Dorsolateral prefrontal cortex (tissue), 120 donors: ENCODE measurements at regions of chr12 and their contacts with region 1.

Region 1: DNA sequence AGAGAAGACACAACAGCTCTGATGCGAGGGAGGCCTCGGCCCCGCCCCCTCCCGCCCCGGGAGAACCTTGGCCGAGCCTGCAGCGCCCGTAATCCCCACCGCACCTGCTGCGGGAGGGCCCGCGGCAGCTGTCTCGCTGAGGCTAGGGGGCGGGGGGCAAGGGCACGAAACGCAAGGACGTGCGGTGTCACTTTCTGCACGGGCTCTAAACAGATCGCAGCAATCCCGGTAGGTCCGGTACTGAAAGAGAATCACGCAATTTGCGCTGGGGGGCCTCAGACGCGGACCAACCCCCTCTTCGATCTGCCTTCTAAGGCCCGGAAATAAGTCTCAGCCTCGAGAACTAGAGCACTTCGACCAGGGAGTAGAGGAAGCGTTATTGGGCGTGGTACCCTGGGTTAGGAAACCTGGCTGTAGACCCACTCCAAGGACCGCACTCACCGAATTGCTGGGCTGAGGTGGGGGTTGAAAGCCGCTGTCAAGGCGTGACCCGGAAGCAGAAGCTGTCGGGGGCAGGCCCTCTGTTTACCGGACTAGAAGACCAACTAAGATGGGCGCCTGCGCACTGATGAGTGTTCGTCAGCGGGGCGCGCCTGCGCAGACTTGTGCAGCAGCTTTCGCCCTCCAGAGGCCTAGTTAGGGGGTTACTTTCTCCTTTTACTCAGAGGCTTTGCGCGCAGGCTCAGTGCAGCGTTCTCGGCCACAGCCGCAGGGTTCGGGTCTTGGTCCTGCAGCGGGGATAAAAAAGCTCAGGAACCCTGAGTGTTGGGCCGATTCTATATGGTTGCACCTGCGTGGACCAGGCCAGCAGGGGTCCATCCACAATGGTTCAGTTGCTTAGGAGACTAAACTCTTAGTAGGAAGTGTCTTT is at the start of gene ASB8:
- DNase-seq: peak; percentile 97 to 100 (median 98)
- H3K4me3 ChIP-seq: peak within 1 kb of the TSS; percentile 60 to 99 (median 90)
- H3K27ac ChIP-seq: peak within 1 kb of the TSS; percentile 71 to 97 (median 90)
- H3K27me3 ChIP-seq: peaks cover 0 to 5% (median 0%) of the 10 kb centered on the region in 45 donors
- CTCF ChIP-seq: peak; percentile 36 to 80 (median 67)
- total RNA-seq, gene ASB8: 36.8 to 80.8 (median 58.2) TPM

Region 2: GRCh38 chr12:47963340-47964040 is 193.8 kb before region 1 on chr12 and contains the start of gene TMEM106C:
- intact Hi-C with region 1: loop called in 1 of 2 experiments (anchors 2 kb)
- DNase-seq: peak; percentile 75 to 91 (median 86)
- H3K4me3 ChIP-seq: peak within 1 kb of the TSS; percentile 48 to 98 (median 85)
- H3K27ac ChIP-seq: peak within 1 kb of the TSS in 13 of 59 donors; percentile 6 to 83 (median 39)
- H3K27me3 ChIP-seq: peaks cover 0 to 19% (median 0%) of the 10 kb centered on the region in 45 donors
- CTCF ChIP-seq: peak; percentile 84 to 99 (median 96)
- total RNA-seq, gene TMEM106C: 21.4 to 75.3 (median 46.1) TPM

Region 3: GRCh38 chr12:48105862-48106680 is 51.2 kb before region 1 on chr12 and contains the start of gene SENP1:
- intact Hi-C with region 1: loop called (anchors 2 to 5 kb)
- DNase-seq: peak; percentile 79 to 93 (median 90)
- H3K4me3 ChIP-seq: peak within 1 kb of the TSS; percentile 56 to 99 (median 92)
- H3K27ac ChIP-seq: peak within 1 kb of the TSS; percentile 83 to 99 (median 95)
- H3K27me3 ChIP-seq: peaks cover 0 to 13% (median 0%) of the 10 kb centered on the region in 45 donors
- CTCF ChIP-seq: peak in 53 of 56 donors; percentile 16 to 74 (median 47)
- total RNA-seq, gene SENP1: 8.3 to 29.6 (median 18.5) TPM

Region 4: DNA sequence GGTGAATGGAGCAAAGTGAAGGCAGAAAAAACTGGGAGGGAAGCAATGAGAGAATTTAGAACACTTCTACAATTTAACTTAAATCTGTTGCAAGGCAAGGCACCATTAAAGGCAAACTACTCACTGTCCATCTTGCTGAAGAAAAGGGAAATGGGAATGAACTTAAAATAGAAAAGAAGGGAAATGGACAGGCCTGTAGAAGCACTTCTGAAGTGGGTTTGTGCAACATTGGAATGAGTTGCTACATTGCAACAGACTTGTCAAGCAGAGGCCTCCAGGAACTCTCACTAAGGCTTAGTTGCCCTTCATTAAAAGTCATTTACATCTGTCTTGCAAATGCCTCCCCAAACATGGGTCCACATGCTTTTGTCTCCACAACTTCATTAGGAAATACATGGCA is 59.5 kb after region 1 on chr12:
- intact Hi-C with region 1: no loop called
- DNase-seq: no peak
- H3K4me3 ChIP-seq: no peak overlapping the region
- H3K27ac ChIP-seq: no peak overlapping the region
- H3K27me3 ChIP-seq: no peaks in the 10 kb centered on the region
- CTCF ChIP-seq: no peak

Region 5: DNA sequence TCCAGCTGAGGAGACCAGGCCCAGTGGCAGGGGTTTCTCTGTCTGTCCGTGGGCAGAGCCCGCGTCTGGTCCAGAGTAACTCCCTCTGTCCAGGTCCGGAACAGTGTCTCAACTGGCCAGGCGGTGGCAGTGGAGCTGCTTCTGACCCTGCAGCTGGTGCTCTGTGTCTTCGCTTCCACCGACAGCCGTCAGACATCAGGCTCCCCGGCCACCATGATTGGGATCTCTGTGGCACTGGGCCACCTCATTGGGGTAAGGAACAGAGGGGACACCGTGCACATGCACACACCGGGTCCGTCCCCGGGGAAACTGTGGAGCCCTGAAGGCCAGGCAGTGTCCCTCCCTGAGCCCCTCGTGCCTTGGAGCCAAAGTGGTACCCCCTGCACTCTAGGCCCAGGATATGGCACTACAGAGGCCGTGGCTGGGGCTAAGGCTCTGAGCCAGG is 1817.0 kb after region 1 on chr12:
- intact Hi-C with region 1: no loop called
- DNase-seq: peak; percentile 57 to 88 (median 86)
- H3K4me3 ChIP-seq: peak overlapping the region in 36 of 59 donors; percentile 1 to 56 (median 24)
- H3K27ac ChIP-seq: peak overlapping the region in 50 of 59 donors; percentile 14 to 86 (median 70)
- H3K27me3 ChIP-seq: no peaks in the 10 kb centered on the region
- CTCF ChIP-seq: peak; percentile 22 to 89 (median 71)